OCI-LY7 (cell line): ENCODE measurements at regions of chr2 and their contacts with region 1.

Region 1: GRCh38 chr2:198657512-198658121 is 800.1 kb downstream of the SATB2 start:
- DNase-seq: peak; percentile 82
- H3K4me3 ChIP-seq: no peak overlapping the region
- H3K27ac ChIP-seq: no peak overlapping the region
- H3K4me1 ChIP-seq: peaks cover 19% of the 10 kb centered on the region
- CTCF ChIP-seq: peak; percentile 97

Region 2: GRCh38 chr2:198374375-198375082 is 283.1 kb before region 1 on chr2:
- CTCF ChIA-PET with region 1: no interaction called
- POLR2A ChIA-PET with region 1: no interaction called
- intact Hi-C with region 1: loop called (anchors 5 kb)
- DNase-seq: peak; percentile 82
- H3K4me3 ChIP-seq: no peak overlapping the region
- H3K27ac ChIP-seq: peak overlapping the region; percentile 41
- H3K4me1 ChIP-seq: peaks cover 30% of the 10 kb centered on the region
- CTCF ChIP-seq: peak; percentile 100